ENCODE measurements at regions of chr6 and their contacts with region 1.

Region 1: DNA sequence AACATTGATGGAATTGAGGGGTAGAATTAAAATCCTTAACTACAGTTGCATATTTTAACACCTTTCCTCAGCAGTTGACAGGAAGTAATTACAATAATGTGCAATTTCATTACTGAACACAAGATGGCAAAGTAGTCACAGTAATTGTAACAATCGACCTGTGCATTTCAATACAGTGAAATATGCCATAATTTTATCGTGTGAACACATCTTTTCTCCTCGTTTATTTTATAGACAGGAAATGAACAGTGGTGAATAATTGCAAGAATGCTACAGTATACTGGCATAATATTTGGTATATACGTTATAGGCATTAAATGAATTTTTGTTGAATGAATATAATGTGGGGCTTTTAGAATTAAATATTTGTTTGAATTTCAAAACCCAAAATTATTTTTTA is 25.0 kb downstream of the CYB5R4 start:
- H3K4me3 ChIP-seq: no peak overlapping the region
- H3K27ac ChIP-seq: no peak overlapping the region
- H3K4me1 ChIP-seq: peaks cover 11% of the 10 kb centered on the region; the same call in 1 of the 2 replicates
- CTCF ChIP-seq: peak; percentile 64

Region 2: DNA sequence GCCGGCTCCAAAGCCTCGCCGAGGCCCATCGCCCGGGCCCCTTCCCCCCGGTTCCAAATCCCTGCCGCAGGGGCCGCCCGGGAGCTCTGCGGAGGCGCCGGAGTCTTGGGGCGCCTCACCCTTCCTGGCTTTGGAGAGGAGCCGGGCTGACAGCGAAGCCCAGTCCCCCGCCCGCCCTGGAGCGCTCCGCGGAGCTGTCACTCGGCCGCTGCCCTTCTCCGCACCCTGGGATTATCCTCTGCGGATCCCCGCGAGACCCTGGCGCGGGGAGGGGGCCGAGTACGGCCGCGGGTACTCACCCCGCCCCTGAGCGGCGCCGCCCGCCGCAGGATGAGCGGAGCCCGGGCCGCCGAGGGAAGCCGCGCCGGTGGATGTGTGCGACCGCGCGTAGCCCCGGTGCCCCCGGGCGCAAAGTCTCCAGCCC is 176.0 kb before region 1 on chr6:
- CTCF ChIA-PET with region 1: no interaction called
- POLR2A ChIA-PET with region 1: no interaction called
- H3K4me3 ChIP-seq: peak overlapping the region; percentile 77
- H3K27ac ChIP-seq: peak overlapping the region; percentile 52; the same call in 1 of the 2 replicates
- H3K4me1 ChIP-seq: no peaks in the 10 kb centered on the region
- CTCF ChIP-seq: no peak

Region 3: GRCh38 chr6:84220809-84221409 is 336.4 kb after region 1 on chr6:
- CTCF ChIA-PET with region 1: interaction called, 42 read pairs
- POLR2A ChIA-PET with region 1: no interaction called
- H3K4me3 ChIP-seq: no peak overlapping the region
- H3K27ac ChIP-seq: no peak overlapping the region
- H3K4me1 ChIP-seq: no peaks in the 10 kb centered on the region
- CTCF ChIP-seq: no peak

Region 4: GRCh38 chr6:84227434-84228197 is 343.1 kb after region 1 on chr6 and contains the start of gene CEP162:
- CTCF ChIA-PET with region 1: interaction called, 42 read pairs
- POLR2A ChIA-PET with region 1: interaction called, 3 read pairs
- H3K4me3 ChIP-seq: peak within 1 kb of the TSS; percentile 94
- H3K27ac ChIP-seq: no peak within 1 kb of the TSS; the same call in 1 of the 2 replicates
- H3K4me1 ChIP-seq: no peaks in the 10 kb centered on the region
- CTCF ChIP-seq: peak; percentile 82; the same call in 1 of the 2 replicates